ENCODE measurements at regions of chr4 and their contacts with region 1.

Region 1: DNA sequence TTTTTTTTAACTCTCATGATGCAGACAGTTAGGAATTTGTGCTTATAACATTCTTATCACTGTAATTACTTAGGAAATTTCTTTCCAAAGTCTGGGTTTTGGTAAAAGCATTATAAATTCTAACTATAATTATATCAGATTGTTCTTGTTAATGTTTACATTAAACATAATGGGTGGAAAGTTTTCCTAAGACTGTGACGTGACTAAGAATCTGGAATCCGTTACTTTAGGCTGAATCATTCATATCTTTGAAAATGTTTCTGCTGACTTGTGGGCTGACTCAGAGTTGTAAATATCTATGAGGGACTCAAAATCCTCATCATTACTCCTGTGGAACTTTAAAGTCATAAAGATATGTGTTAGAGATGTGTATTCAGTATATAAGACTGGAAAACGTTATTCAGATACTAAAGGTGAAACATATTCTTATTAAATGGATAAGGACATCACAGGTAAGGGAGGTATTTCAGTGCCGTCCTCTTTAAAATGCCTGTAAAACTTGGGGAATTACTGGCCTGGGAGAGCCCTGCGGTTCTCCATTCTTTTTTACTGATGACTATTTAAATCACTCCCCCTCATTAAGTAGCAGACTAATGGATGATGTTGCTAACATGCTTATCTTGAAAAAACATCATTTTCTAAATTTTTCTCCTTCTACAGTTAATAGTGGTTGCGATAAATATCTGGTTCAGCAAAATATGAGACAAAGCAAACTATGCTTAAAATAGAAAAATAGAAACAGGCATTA is 159.0 kb downstream of the DCLK2 start:
- DNase-seq: peak; percentile 98
- ATAC-seq: peak; percentile 70
- H3K4me3 ChIP-seq: no peak overlapping the region
- H3K27ac ChIP-seq: peak overlapping the region; percentile 93
- H3K4me1 ChIP-seq: peaks cover 33% of the 10 kb centered on the region
- H3K27me3 ChIP-seq: no peaks in the 10 kb centered on the region
- CTCF ChIP-seq: no peak
- POLR2A ChIP-seq: no peak
- RAD21 ChIP-seq: no peak

Region 2: DNA sequence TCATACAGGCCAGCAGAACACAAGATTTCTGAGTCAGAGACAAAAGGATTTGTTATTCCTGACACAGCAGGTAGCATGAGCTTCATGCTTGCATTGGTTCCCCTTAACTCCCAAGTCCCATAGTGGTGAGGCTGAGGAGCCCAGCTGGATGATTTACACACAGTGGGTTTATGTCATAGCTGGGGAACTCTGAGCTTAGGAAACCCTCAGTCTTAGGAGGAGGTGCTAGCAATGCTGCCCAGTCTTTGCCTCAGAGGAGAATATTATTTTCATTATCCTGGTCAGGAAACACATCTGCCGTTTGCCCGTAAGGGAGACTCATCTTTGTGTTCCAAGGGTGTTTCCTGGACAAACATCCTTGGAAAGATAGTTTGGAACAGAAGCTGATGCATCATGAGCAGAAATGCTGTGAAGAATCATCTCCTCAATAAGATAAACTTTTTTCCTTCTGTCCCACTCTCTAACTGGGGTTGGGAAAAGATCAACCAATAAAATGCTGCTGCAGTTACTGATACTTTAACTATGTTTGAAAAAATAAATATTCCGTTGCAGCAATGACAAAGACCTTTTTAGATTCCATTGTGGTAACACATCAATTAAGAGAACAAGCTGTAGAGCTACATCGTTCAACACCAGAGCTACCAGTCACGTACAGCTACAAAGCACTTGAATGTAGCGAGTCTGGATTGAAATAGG is 12.2 kb before region 1 on chr4:
- CTCF ChIA-PET with region 1: interaction called, 11 read pairs
- POLR2A ChIA-PET with region 1: no interaction called
- dilution Hi-C with region 1: no loop called
- in situ Hi-C with region 1: no loop called
- intact Hi-C with region 1: loop called (anchors 1 kb)
- DNase-seq: peak; percentile 99
- ATAC-seq: peak; percentile 86
- H3K4me3 ChIP-seq: no peak overlapping the region
- H3K27ac ChIP-seq: peak overlapping the region; percentile 97
- H3K4me1 ChIP-seq: peaks cover 15% of the 10 kb centered on the region
- H3K27me3 ChIP-seq: no peaks in the 10 kb centered on the region
- CTCF ChIP-seq: no peak
- POLR2A ChIP-seq: peak; percentile 67
- RAD21 ChIP-seq: no peak

Region 3: DNA sequence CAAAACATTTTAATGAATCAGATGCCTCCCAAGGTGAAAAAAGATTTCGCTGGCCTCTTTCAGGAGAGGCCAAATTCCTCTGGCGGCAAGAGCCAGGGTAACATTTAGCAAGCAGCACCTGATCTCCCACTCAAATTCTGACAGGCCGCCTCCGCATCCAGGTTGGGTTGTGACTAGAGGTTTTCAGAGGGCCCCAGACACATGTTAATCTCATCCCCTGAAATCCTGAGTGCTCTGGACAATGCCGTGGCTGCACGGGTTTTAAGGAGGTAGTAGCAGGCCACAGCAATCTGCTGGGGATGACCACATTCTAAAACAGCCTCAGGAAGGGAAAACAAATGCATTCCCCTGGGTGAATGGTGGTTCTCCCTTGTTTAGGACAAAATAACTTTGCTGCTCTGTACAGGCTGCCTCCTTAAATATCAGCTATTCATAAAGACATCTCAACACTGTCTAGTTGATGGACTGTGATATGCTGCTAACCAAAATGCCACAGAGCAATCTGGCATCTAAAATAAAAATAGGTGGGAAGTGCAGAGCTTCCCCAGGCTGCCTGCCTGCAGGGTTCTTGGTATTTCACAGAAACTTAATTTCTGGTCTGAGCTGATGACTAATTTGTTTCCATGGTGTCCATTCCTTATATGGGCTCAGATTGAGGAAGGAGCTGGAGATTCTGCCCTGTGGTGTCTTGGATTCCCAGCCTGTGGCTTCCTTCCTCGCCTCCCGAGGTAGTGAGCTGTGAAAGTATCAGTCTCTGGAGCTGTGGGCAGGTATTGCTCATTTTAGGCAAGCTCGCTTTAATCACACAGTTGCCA is 43.0 kb after region 1 on chr4:
- CTCF ChIA-PET with region 1: no interaction called
- POLR2A ChIA-PET with region 1: no interaction called
- dilution Hi-C with region 1: no loop called
- in situ Hi-C with region 1: no loop called
- intact Hi-C with region 1: loop called (anchors 5 kb)
- DNase-seq: peak; percentile 86
- ATAC-seq: peak; percentile 80
- H3K4me3 ChIP-seq: no peak overlapping the region
- H3K27ac ChIP-seq: peak overlapping the region; percentile 91
- H3K4me1 ChIP-seq: peaks cover 19% of the 10 kb centered on the region
- H3K27me3 ChIP-seq: no peaks in the 10 kb centered on the region
- CTCF ChIP-seq: no peak
- POLR2A ChIP-seq: no peak; the same call in 1 of the 2 replicates
- RAD21 ChIP-seq: no peak